Esophagus squamous epithelium (tissue), 5 donors: ENCODE measurements at regions of chr3 and their contacts with region 1.

Region 1: GRCh38 chr3:39180546-39181346 is 11.6 kb downstream of the XIRP1 start:
- DNase-seq: peak; percentile 40
- H3K4me3 ChIP-seq: peak overlapping the region; percentile 14 to 55 (median 38)
- H3K27ac ChIP-seq: peak overlapping the region; percentile 72 to 90 (median 88)
- H3K4me1 ChIP-seq: peaks cover 19 to 80% (median 34%) of the 10 kb centered on the region in 3 donors
- H3K27me3 ChIP-seq: no peaks in the 10 kb centered on the region
- CTCF ChIP-seq: peak in 3 of 6 experiments; percentile 27 to 44 (median 32)
- POLR2A ChIP-seq: peak in 1 of 4 donors; percentile 30

Region 2: GRCh38 chr3:39136533-39137433 is 44.0 kb before region 1 on chr3:
- intact Hi-C with region 1: no loop called
- DNase-seq: no peak
- H3K4me3 ChIP-seq: no peak overlapping the region
- H3K27ac ChIP-seq: no peak overlapping the region
- H3K4me1 ChIP-seq: peaks cover 13 to 85% (median 20%) of the 10 kb centered on the region in 3 donors
- H3K27me3 ChIP-seq: no peaks in the 10 kb centered on the region
- CTCF ChIP-seq: no peak
- POLR2A ChIP-seq: no peak

Region 3: DNA sequence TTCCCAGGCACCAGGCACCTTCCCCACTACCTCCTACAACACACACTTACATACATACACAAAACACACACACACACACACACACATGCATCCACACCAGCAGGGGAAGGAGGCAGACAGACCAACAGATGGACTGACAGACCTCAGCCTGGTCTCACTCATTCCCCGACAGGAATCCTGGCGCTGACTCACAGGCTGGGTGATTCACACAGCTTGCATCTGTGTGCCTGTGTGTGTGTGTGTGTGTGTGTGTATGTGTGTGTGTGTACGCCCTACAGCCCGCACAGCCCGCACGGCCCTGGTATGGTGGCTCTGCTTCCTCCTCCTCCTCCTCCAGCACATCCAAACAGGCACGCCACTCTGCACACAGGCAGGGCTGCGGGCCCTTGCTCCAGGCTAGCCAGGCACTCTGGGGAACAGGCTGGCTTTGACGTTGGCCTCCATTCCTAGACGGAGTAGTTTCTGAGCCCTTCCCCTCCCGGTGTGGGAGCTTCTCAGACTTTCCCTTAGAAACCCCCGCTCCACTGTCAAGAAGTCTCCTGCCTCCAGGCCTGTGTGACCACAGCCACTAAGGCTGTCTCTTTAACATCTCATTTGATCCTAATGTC is 33.7 kb before region 1 on chr3:
- intact Hi-C with region 1: loop called (anchors 5 kb)
- DNase-seq: peak; percentile 45
- H3K4me3 ChIP-seq: peak overlapping the region in 3 of 4 donors; percentile 13 to 55 (median 22)
- H3K27ac ChIP-seq: peak overlapping the region; percentile 80 to 99 (median 96)
- H3K4me1 ChIP-seq: peaks cover 62 to 100% (median 72%) of the 10 kb centered on the region in 3 donors
- H3K27me3 ChIP-seq: no peaks in the 10 kb centered on the region
- CTCF ChIP-seq: peak in 1 of 6 experiments; percentile 15
- POLR2A ChIP-seq: peak in 1 of 4 donors; percentile 50